ENCODE measurements at regions of chr10 and their contacts with region 1.

Region 1: DNA sequence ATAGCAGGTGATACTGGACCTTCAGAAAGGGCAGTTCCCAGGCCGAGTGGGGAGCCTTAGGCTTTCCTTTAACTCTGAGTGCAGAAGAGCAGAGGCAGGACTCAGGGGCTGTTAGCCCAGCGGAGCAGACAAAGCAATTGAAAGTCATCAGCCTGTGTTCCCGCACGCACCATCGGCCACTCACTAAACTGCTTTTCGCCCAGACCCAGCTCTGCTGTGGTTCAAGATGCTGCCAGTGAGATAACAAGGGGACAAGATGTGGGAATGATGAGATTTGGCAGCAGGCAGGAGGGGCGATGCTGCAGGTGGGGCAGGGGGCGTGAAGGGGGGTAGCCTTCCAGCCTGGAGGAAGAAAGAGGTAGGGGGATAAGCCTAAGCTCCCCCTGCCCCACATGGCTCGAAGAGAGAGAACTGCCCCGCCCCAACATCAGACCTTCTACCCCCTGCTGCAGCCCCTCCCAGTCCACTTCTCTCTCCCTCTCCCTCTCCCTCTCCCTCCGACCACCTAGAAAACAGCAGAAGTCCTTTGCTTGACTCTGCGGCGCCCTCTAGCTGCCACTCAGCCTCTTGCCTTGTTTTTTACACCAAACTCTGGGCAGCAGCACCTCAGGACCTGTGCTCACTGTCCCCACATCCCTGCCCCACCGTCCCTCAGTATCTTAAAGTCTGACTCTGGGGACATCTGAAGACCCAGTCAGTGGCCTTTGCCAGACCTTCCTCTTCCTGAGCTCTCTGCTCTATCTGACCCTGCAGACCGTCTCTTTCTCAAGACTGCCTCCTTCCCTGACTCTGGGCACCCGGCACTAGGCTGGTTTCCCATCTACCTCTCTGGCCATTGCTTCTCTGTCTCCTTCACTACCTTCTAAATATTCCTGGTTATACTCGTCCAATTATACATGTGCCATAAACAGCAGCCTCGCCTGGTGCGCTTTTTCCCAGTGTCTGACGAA is 110.5 kb downstream of the C10orf105 start:
- DNase-seq: no peak
- H3K4me3 ChIP-seq: no peak overlapping the region
- H3K27ac ChIP-seq: no peak overlapping the region
- H3K27me3 ChIP-seq: peaks cover 39% of the 10 kb centered on the region
- CTCF ChIP-seq: peak; percentile 86

Region 2: DNA sequence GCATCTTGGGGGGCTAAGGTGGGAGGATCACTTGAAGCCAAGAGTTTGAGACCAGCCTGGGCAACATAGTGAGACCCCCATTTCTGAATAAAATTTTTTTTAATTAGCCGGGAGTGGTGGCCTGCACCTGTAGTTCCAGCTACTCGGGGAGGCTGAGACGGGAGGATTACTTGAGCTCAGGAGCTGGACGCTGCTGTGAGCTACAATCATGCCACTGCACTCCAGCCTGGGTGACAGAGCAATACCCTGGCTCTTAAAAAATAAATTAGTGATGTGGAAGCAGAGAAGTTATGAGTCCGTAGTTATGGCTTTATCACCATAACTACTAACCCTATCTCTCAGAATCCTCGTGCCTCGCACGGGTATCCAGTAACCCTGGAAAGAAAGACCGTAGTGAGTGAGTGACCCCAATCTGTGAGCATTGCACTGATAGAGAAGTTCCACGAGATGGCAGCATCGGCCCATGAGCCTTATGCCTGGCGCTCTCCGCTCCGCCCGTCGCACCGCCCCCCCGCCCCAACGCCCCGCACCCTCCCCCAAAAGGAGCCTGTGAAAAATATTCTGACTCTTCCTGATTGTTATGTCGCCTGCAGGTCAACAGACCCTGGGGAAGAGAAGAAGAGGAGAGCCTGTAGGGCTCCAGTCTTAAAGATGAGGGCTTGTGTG is 294.9 kb before region 1 on chr10:
- CTCF ChIA-PET with region 1: interaction called, 23 read pairs
- POLR2A ChIA-PET with region 1: no interaction called
- DNase-seq: no peak
- H3K4me3 ChIP-seq: no peak overlapping the region
- H3K27ac ChIP-seq: no peak overlapping the region
- H3K27me3 ChIP-seq: peaks cover 14% of the 10 kb centered on the region
- CTCF ChIP-seq: peak; percentile 79

Region 3: DNA sequence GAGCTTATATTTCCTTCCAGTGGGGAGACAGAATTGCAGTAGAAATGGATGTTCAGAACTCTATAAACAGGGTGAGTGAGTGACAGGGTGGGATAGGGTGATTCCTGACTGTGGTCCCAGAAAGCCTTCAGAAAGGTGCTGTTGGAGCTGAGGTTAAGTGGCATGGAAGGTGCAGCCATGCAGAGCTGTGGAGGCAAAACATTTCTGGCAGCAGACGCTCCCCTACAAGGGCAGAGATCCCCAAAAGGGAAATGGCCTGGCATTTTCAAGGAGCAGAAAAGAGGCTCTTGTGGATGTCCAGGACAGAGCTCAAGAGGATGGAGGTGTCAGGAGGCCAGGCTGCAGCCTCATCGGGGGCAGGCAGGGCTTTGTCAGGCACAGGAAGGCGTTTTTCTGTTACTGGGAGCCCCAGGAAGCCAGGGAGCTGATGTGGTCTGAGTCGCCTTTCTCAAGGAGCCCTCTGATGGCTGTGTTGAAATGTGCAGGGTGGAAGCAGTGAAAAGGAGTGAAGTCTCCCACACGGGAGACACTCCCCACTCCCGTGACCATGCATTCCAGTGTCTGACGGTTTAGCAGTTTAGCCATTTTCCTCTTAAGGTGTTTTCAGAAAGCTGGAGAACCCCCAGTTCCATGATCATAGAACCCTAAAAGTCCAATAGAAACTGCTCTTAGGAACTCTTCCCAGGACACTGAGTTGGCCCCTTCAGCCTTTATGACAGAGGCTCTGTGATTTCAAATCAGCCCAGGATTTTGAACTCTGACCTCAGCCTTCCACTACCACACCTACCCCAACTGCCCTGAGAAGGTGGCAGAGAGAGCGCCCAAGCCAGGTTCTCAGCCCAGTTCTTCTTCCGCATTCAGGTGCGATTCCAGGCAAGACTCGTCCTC is 14.2 kb after region 1 on chr10:
- CTCF ChIA-PET with region 1: interaction called, 26 read pairs
- POLR2A ChIA-PET with region 1: no interaction called
- DNase-seq: no peak
- H3K4me3 ChIP-seq: no peak overlapping the region
- H3K27ac ChIP-seq: no peak overlapping the region
- H3K27me3 ChIP-seq: peaks cover 29% of the 10 kb centered on the region
- CTCF ChIP-seq: peak; percentile 26; the same call in 1 of the 2 replicates

Region 4: GRCh38 chr10:73448384-73448783 is 1839.3 kb after region 1 on chr10:
- CTCF ChIA-PET with region 1: no interaction called
- POLR2A ChIA-PET with region 1: no interaction called
- DNase-seq: no peak
- H3K4me3 ChIP-seq: no peak overlapping the region
- H3K27ac ChIP-seq: no peak overlapping the region
- H3K27me3 ChIP-seq: no peaks in the 10 kb centered on the region
- CTCF ChIP-seq: no peak

Measured in AG04450 (cell line).